ENCODE measurements at regions of chr14 and their contacts with region 1.

Region 1: DNA sequence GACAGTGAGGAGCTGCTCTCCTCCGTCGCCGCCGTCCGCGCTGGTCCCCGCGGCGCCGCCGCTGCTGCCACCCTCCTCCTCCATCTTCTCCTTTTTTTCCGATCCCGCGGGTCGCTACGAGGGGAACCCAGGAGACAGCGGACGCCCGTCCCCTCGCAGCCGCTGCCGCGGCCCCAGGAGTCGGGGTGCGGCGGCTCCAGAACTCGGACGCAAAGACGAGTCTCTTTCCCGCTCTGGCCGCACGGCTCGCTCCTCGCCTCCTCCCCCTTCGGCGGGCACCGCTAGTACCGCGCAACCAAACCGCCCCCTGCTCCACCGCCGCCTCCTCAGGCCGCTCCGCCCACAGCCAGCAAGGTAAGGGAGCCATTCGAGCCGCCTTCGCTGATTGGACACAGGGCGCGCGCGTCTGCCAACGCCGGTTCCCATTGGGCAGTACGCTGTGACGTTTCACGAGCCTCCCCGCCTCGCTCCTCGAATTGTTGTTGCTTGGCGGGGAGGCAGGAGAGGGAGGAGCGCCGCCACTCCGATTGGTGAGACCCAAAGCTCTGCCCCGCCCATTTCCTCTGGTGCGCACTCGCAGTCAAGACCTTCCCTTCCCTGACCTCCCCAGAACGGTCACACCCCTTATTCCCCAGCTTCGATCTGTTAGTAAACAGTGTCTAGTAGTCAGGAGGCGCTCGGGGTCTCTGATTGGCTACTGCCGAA is at the start of gene RPS6KA5:
- DNase-seq: peak; percentile 100
- ATAC-seq: peak; percentile 97
- total RNA-seq, gene RPS6KA5: 14.6 TPM

Region 2: GRCh38 chr14:90903101-90903500 is 157.4 kb before region 1 on chr14:
- intact Hi-C with region 1: loop called (anchors 5 kb)
- DNase-seq: no peak
- ATAC-seq: peak; percentile 89

Region 3: GRCh38 chr14:91114079-91115065 is 53.9 kb after region 1 on chr14:
- intact Hi-C with region 1: loop called (anchors 2 kb)
- DNase-seq: peak; percentile 48
- ATAC-seq: peak; percentile 78